Activated CD8-positive, alpha-beta memory T cell treated with anti-CD3 and anti-CD28 coated beads, Interleukin-2, amount 10 ng/mL, durations not matched to agents 7 days and 5 days (primary cell): ENCODE measurements at regions of chr6 and their contacts with region 1.

Region 1: DNA sequence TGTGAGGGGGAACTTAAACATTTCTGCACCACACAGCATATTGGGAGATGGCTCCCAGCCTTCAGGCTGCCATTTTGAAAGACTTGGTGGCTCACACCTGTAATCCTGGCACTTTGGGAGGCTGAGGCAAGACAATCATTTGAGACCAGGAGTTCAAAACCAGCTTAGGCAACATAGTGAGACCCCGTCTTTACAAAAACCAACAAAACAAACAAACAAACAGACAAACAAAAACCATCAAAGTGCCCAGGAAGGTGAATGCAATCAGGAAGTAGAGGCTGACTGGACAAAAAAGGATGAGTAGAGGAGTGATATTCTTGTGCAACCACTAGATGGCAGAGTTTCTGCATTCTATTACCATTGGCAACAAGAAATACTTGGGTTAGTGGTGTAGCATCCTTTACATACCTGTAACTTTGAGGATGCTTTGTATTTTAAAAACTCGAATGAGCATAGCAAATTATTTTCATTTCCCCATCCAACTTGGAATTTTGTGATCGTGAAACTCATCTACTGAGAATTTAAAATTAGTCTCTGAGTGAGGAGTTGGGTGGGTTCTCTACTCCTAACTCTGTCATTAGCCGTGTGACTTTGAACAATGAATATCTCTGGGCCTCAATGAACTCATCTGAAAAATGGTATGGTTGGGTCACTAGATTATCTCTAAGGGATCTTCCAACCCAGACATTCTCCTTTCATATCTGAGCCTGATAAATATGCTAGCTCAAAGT is 84.4 kb downstream of the CRYBG1 start:
- DNase-seq: no peak
- ATAC-seq: peak; percentile 73
- H3K4me3 Mint-ChIP-seq: no peak overlapping the region
- H3K27ac Mint-ChIP-seq: no peak overlapping the region
- H3K4me1 Mint-ChIP-seq: peaks cover 19% of the 10 kb centered on the region
- H3K27me3 Mint-ChIP-seq: peaks cover 37% of the 10 kb centered on the region

Region 2: GRCh38 chr6:106339334-106340029 is 105.5 kb before region 1 on chr6:
- CTCF ChIA-PET with region 1: interaction called, 21 read pairs
- DNase-seq: peak; percentile 66
- ATAC-seq: peak; percentile 89
- H3K4me3 Mint-ChIP-seq: no peak overlapping the region
- H3K27ac Mint-ChIP-seq: no peak overlapping the region
- H3K4me1 Mint-ChIP-seq: peaks cover 5% of the 10 kb centered on the region
- H3K27me3 Mint-ChIP-seq: peaks cover 28% of the 10 kb centered on the region

Region 3: DNA sequence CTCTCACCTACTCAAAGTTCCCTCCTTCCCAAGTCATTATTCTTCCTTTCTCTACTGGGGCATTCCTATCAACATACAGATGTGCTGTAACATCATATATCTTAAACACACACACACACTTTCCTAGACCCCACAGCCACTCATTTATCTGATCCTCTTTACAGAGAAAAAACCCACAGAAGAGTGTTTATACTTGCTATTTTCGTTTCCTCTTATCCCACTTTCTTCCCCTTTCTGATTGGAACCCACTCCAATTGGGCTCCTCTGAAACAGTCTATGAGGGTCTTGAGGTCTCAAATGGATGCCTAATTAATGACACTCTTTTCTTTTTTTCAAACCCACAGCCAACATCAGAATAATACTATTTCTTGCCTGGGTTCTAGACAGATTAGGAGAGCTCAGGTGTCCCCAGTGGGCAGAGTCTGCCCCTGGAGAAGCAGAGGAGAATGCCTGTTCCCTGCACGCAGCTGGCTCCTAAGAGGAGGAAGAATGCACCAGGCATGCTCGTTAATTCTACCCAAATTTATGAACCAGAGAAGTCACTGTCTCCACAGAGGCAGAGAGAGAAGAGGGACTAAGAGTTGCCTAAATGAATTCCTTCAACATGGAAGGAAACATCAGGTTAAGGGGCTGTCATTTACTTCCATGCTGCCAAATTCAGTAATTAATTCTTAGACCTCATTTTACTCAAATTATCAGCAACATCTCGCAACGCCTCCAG is 18.5 kb before region 1 on chr6:
- CTCF ChIA-PET with region 1: no interaction called
- DNase-seq: no peak
- ATAC-seq: no peak
- H3K4me3 Mint-ChIP-seq: no peak overlapping the region
- H3K27ac Mint-ChIP-seq: no peak overlapping the region
- H3K4me1 Mint-ChIP-seq: no peaks in the 10 kb centered on the region
- H3K27me3 Mint-ChIP-seq: peaks cover 5% of the 10 kb centered on the region

Region 4: GRCh38 chr6:106997390-106998158 is 552.6 kb after region 1 on chr6:
- CTCF ChIA-PET with region 1: interaction called, 11 read pairs
- DNase-seq: peak; percentile 62
- ATAC-seq: peak; percentile 63
- H3K4me3 Mint-ChIP-seq: no peak overlapping the region
- H3K27ac Mint-ChIP-seq: no peak overlapping the region
- H3K4me1 Mint-ChIP-seq: peaks cover 5% of the 10 kb centered on the region
- H3K27me3 Mint-ChIP-seq: no peaks in the 10 kb centered on the region